Aorta (tissue), 5 donors: ENCODE measurements at regions of chr1 and their contacts with region 1.

Region 1: DNA sequence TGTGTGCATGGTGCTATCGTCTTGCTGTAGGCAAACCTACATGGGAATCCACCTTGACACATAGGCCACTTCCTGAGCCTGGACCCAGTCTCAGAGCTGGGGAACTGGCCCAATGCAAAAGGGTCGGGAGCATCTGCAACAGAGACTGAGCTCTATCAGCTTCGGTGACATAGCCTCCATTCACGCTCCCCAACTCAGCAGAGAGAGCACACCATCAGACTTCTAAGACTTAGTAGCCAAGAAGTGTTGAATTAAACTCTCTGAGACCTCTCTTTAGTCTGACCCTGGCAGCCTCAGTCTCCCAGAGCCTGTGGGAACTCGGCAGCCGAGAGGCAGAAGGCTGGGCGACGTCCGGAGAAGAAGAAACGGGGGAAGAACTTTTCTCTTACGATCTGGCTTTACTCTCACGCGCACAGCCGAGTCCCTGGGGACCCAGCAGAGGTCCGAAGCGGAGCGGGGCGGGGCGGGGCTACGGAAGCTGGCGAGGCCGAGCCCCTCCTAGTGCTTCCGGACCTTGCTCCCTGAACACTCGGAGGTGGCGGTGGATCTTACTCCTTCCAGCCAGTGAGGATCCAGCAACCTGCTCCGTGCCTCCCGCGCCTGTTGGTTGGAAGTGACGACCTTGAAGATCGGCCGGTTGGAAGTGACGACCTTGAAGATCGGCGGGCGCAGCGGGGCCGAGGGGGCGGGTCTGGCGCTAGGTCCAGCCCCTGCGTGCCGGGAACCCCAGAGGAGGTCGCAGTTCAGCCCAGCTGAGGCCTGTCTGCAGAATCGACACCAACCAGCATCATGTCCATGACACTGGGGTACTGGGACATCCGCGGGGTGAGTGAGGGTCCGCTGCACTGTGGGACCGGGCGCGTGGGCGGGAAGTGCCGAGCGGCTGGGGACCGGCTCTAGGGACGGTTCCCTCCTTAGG is at the start of gene GSTM4:
- DNase-seq: peak; percentile 93 to 96
- ATAC-seq: peak; percentile 94
- H3K4me3 ChIP-seq: peak within 1 kb of the TSS; percentile 46 to 67
- H3K27ac ChIP-seq: peak within 1 kb of the TSS; percentile 43 to 85
- H3K4me1 ChIP-seq: no peaks in the 10 kb centered on the region
- H3K27me3 ChIP-seq: no peaks in the 10 kb centered on the region
- total RNA-seq, gene GSTM4: 15.0 to 29.8 TPM

Region 2: GRCh38 chr1:109667452-109668122 is 11.7 kb after region 1 on chr1 and contains the start of gene GSTM2:
- intact Hi-C with region 1: loop called in 1 of 2 experiments (anchors 1 kb)
- DNase-seq: peak; percentile 96 to 97
- ATAC-seq: peak; percentile 98
- H3K4me3 ChIP-seq: peak within 1 kb of the TSS; percentile 38 to 69
- H3K27ac ChIP-seq: no peak within 1 kb of the TSS
- H3K4me1 ChIP-seq: no peaks in the 10 kb centered on the region
- H3K27me3 ChIP-seq: no peaks in the 10 kb centered on the region
- total RNA-seq, gene GSTM2: 48.3 to 136 TPM